ENCODE measurements at regions of chr1 and their contacts with region 1.

Region 1: DNA sequence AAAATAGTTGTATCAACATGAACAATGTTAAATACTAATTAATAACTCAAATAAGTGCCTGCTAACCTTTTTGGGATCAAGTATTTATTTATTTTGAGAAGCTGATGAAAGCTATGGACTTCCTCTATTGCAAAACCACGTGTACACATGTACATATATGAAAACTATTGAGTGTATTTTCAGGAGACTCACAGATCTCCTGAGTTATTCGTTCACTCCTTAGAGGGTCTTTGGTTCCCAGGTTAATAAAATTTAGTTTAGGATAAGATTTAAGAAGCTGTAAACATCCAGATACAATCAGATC is 130.5 kb downstream of the DISC1 start:
- DNase-seq: no peak
- ATAC-seq: no peak
- H3K4me3 Mint-ChIP-seq: no peak overlapping the region
- H3K27ac Mint-ChIP-seq: no peak overlapping the region
- H3K4me1 Mint-ChIP-seq: no peaks in the 10 kb centered on the region
- H3K27me3 Mint-ChIP-seq: no peaks in the 10 kb centered on the region

Region 2: DNA sequence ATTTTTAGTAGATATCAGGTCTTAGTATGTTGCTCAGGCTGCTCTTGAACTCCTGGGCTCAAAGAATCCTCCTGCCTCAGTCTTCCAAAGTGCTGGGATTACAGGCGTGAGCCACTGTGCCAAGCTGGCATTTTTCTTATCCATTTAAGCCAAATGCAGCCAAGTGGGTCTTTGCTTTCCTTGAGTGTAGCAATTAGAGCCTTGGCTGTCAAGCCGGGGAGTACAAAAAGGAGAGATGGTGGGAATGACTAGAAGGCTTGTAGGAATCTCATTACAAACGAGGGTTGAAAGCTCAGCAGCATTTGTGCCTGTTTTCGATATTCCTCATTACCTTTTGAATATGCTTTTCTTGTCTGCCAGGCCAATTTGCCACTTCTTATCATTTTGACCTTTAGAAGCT is 10.4 kb after region 1 on chr1:
- CTCF ChIA-PET with region 1: interaction called, 16 read pairs
- DNase-seq: no peak
- ATAC-seq: no peak
- H3K4me3 Mint-ChIP-seq: no peak overlapping the region
- H3K27ac Mint-ChIP-seq: no peak overlapping the region
- H3K4me1 Mint-ChIP-seq: no peaks in the 10 kb centered on the region
- H3K27me3 Mint-ChIP-seq: no peaks in the 10 kb centered on the region

Region 3: DNA sequence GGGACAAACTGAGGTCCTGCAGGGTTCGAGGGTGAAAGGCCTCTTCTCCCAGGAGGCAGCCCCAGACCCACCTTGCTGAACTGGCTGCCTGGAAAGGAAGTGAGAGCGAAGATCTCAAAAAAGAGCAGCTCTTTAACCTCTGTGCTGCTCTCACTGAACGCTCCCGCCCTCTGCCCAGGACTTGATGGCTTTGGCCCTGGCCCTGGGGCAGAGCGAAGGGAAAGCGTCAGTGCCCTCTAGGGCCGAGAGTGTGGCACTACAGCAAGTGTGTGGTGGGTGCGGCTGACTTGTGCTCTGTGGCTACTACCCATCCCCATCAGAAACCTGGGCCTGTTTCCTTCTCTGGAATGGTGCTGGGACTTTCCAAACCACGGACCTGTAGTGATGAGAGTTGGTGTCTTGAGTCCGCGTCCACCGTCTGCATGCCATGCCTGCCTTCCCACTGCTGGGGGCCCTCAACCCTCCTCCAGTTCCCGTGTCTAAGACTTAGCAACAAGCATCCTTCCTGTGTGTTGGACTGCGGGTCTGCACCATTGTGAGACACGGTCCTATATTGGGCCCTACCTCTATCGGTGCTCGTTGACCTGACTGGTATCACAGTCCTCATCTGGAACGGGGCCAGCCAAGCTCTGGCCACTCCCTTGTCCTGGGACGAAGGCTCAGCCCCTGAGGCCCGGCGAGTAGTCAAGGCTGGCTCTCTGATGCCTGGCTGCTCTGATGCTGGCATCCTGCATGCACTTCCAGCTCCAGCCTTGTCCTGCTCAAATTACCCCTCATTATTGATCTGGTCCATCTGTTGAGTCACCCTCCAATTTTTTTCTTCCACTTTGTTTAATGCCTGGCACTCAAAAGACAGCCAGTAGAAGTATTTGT is 49.8 kb after region 1 on chr1:
- CTCF ChIA-PET with region 1: interaction called, 15 read pairs
- DNase-seq: peak; percentile 49
- ATAC-seq: peak; percentile 86
- H3K4me3 Mint-ChIP-seq: no peak overlapping the region
- H3K27ac Mint-ChIP-seq: no peak overlapping the region
- H3K4me1 Mint-ChIP-seq: no peaks in the 10 kb centered on the region
- H3K27me3 Mint-ChIP-seq: no peaks in the 10 kb centered on the region

Region 4: GRCh38 chr1:231866392-231867331 is 109.6 kb after region 1 on chr1:
- CTCF ChIA-PET with region 1: no interaction called
- DNase-seq: peak; percentile 61
- ATAC-seq: no peak
- H3K4me3 Mint-ChIP-seq: no peak overlapping the region
- H3K27ac Mint-ChIP-seq: no peak overlapping the region
- H3K4me1 Mint-ChIP-seq: peaks cover 10% of the 10 kb centered on the region
- H3K27me3 Mint-ChIP-seq: no peaks in the 10 kb centered on the region

Region 5: DNA sequence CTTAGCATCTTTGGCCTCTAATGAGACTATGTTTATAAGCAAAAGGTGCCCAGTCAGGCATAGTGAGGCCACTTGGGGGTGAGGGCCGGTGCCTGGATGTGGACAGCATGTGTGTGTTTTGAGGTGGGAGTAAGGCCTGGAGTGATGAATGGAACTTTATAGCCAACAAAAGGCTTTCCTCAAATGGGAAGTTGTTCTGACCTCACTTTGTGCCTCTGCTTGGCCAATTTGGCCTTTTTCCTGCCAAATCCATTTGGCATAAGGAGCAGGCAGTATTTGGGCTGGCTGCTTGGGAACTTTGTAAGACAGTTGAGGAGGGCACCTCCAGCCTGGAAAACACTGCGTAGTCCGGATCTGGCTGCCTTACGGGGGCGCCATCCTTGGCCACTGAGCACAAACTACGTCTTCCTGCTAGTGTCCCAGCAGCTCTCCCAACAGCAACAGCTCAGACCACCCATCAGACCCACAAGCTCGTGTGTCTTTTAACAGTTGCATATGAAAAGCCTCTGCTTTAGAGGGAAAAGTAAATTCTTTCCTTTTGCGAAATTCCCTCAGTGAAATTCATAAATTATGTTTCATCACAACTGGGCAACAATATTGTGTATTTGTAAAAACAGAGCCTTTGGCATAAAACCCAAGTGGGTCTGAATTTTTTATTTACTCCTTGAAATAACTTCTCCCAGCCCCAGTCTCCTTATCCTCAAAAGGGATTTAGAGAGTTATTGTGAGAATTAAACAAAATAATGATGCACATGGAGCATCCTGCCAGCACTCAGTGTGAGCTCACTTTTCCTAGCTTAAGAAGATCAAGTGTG is 192.4 kb after region 1 on chr1:
- CTCF ChIA-PET with region 1: no interaction called
- DNase-seq: no peak
- ATAC-seq: no peak
- H3K4me3 Mint-ChIP-seq: no peak overlapping the region
- H3K27ac Mint-ChIP-seq: no peak overlapping the region
- H3K4me1 Mint-ChIP-seq: no peaks in the 10 kb centered on the region
- H3K27me3 Mint-ChIP-seq: no peaks in the 10 kb centered on the region